SK-N-SH (cell line): ENCODE measurements at regions of chr6 and their contacts with region 1.

Region 1: GRCh38 chr6:11496152-11497060 is 41.1 kb upstream of the TMEM170B start:
- DNase-seq: peak; percentile 70
- H3K4me3 ChIP-seq: no peak overlapping the region; a peak in 1 of 4 replicates
- H3K27ac ChIP-seq: peak overlapping the region; percentile 45 to 91
- H3K4me1 ChIP-seq: peaks cover 4 to 24% of the 10 kb centered on the region in 2 experiments; a peak in 3 of 4 replicates
- H3K27me3 ChIP-seq: no peaks in the 10 kb centered on the region
- CTCF ChIP-seq: peak; percentile 96
- EP300 ChIP-seq: peak in 1 of 2 experiments; percentile 61; a peak in 1 of 4 replicates
- RAD21 ChIP-seq: peak; percentile 98

Region 2: DNA sequence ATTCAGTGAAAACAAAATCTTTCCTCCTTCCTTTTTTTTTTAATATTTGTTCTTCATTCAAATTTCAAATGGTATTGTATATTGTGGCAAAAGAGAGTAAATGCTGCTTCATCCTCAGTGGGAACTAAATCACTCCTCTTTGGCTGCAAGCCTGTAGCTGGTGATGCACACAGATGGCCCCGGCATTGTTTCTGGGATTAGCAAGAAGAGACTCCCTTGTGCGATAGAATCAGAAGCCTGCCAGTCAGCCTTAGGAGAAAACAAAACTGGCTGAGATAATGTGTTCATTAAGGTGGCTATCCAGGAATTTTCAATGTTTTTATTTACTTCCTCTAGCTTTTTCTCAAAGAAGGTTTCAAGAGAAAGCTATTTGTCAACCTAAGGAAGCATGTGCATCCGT is 431.6 kb before region 1 on chr6:
- CTCF ChIA-PET with region 1: interaction called, 19 read pairs
- POLR2A ChIA-PET with region 1: no interaction called
- DNase-seq: peak; percentile 39
- H3K4me3 ChIP-seq: no peak overlapping the region
- H3K27ac ChIP-seq: no peak overlapping the region
- H3K4me1 ChIP-seq: peaks cover 0 to 3% of the 10 kb centered on the region in 2 experiments; a peak in 1 of 4 replicates
- H3K27me3 ChIP-seq: no peaks in the 10 kb centered on the region
- CTCF ChIP-seq: no peak
- EP300 ChIP-seq: no peak
- RAD21 ChIP-seq: no peak

Region 3: GRCh38 chr6:11144393-11144851 is 352.0 kb before region 1 on chr6:
- CTCF ChIA-PET with region 1: interaction called, 181 read pairs
- POLR2A ChIA-PET with region 1: no interaction called
- DNase-seq: peak; percentile 76
- H3K4me3 ChIP-seq: peak overlapping the region in 1 of 2 experiments; percentile 32; a peak in 1 of 4 replicates
- H3K27ac ChIP-seq: peak overlapping the region in 1 of 2 experiments; percentile 36; a peak in 1 of 4 replicates
- H3K4me1 ChIP-seq: peaks cover 5 to 7% of the 10 kb centered on the region in 2 experiments; a peak in 3 of 4 replicates
- H3K27me3 ChIP-seq: no peaks in the 10 kb centered on the region
- CTCF ChIP-seq: peak; percentile 98
- EP300 ChIP-seq: no peak
- RAD21 ChIP-seq: peak; percentile 96

Region 4: DNA sequence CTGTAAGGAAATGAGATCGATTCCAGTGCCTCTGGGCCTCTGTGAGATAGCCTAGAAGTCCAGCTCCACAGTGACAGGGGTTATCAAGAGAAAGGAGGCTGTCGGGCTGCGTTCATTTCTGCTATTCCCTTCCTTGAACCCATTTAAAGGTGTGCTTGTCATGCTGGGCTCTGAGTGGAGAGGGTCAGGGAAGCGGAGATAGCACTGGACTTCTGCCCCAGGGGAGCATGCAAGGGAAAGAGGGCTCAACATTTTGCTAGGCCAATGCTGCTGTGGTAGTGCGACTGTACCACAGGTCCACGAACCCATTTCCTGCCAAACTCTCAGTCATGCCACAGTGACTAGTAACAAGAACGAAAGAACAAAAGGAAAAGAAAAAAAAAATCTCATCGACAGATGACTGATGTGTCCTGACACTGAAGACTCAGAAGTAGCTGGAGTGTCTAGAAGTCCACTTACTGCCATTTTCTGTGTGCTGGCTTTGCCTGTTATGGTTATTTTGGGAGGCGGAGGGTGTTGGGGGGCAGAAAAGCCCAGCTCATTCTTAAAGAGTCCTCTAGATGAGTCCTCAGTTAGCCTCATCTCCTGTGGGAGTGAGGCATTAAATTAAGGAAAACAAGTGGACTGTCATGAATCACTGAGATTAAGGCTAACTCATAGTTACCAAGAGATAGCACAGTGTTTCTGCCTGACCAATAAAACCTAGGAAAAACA is 272.0 kb before region 1 on chr6:
- CTCF ChIA-PET with region 1: interaction called, 27 read pairs
- POLR2A ChIA-PET with region 1: no interaction called
- DNase-seq: no peak
- H3K4me3 ChIP-seq: no peak overlapping the region
- H3K27ac ChIP-seq: peak overlapping the region; percentile 44 to 78
- H3K4me1 ChIP-seq: peaks cover 25 to 56% of the 10 kb centered on the region in 2 experiments; a peak in 3 of 4 replicates
- H3K27me3 ChIP-seq: no peaks in the 10 kb centered on the region
- CTCF ChIP-seq: no peak
- EP300 ChIP-seq: no peak
- RAD21 ChIP-seq: no peak

Region 5: DNA sequence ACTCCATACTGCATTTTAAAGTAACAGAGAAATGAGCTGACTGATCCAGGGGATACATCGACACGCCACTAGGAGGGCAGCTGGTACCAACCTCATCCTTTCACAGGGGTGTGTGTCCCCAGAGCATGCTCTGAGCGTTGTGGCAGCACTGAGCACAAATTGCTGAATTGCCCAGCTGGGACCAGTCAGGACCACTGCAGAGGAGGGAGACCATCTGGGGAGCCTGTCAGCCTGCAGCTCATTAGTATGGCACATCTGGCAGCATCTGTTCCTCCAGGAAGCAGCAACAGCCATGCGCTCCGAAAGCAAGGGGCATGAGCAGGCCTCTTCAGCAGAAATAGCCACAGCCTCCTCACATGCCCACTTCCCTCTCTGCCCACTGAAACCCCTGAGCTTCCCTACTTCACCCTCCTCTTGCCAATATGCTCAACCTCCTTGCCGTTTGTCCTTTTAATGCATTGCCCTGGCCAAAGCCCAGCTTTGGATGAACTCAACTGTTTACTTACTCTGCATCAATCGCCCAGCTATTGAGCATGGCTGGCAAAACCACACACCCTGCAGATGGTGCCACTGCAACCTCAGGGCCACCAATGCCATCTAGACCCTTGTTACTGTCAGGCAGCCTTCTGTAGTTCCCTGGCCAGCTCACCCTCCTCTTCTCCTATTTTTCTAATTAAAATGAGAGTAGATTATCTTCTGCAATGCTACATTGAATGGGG is 186.3 kb before region 1 on chr6:
- CTCF ChIA-PET with region 1: interaction called, 23 read pairs
- POLR2A ChIA-PET with region 1: interaction called, 3 read pairs
- DNase-seq: peak; percentile 67
- H3K4me3 ChIP-seq: no peak overlapping the region
- H3K27ac ChIP-seq: peak overlapping the region in 1 of 2 experiments; percentile 64; a peak in 2 of 4 replicates
- H3K4me1 ChIP-seq: peaks cover 0 to 7% of the 10 kb centered on the region in 2 experiments; a peak in 1 of 4 replicates
- H3K27me3 ChIP-seq: no peaks in the 10 kb centered on the region
- CTCF ChIP-seq: no peak
- EP300 ChIP-seq: no peak
- RAD21 ChIP-seq: peak; percentile 23; the same call in 1 of the 2 replicates

Region 6: DNA sequence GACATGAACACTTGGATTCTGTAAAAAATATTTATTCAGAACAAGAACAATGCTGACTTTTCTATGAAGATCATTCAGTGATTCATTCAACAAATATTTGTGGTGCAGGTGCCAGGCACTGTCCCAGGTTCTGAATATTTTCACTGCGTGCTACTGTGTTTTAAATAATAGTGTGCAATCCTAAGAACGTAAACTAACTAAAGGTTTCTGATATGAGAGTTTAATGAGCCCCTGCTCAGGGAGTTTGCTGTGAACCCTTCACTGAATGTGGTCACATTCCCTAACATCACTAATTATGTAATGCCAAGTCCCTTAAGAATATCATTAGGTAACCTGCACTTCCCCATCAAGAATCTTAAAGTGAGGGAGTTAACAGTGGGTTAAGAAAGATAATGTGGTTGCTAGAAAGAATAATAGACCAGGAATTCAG is 39.4 kb after region 1 on chr6:
- CTCF ChIA-PET with region 1: interaction called, 10 read pairs
- POLR2A ChIA-PET with region 1: interaction called, 3 read pairs
- DNase-seq: no peak
- H3K4me3 ChIP-seq: no peak overlapping the region
- H3K27ac ChIP-seq: no peak overlapping the region
- H3K4me1 ChIP-seq: peaks cover 0 to 5% of the 10 kb centered on the region in 2 experiments; a peak in 2 of 4 replicates
- H3K27me3 ChIP-seq: no peaks in the 10 kb centered on the region
- CTCF ChIP-seq: no peak
- EP300 ChIP-seq: no peak
- RAD21 ChIP-seq: no peak

Region 7: GRCh38 chr6:11722805-11723631 is 226.6 kb after region 1 on chr6:
- CTCF ChIA-PET with region 1: no interaction called
- POLR2A ChIA-PET with region 1: no interaction called
- DNase-seq: no peak
- H3K4me3 ChIP-seq: no peak overlapping the region
- H3K27ac ChIP-seq: no peak overlapping the region
- H3K4me1 ChIP-seq: no peaks in the 10 kb centered on the region
- H3K27me3 ChIP-seq: no peaks in the 10 kb centered on the region
- CTCF ChIP-seq: no peak
- EP300 ChIP-seq: no peak
- RAD21 ChIP-seq: no peak

Region 8: DNA sequence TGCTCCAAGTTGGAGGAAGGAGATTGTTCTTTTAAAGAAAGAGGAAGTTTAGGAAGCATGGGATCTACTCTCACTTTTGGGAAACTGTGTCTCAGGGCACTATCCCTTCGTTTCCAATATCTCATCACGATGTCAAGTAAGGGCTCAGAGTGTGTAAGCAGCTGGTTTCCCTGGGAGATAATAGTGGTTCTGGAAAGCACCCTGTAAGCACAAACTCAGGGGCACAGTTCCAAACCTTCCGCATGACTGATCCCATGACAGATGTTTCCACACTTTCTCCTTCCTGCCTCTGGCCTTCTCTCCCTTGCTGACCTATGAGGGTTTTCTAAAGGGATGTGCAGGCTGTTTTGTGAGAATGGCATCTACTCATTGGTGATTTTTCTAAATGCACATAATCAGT is 248.3 kb after region 1 on chr6:
- CTCF ChIA-PET with region 1: no interaction called
- POLR2A ChIA-PET with region 1: no interaction called
- DNase-seq: no peak
- H3K4me3 ChIP-seq: no peak overlapping the region
- H3K27ac ChIP-seq: no peak overlapping the region
- H3K4me1 ChIP-seq: no peaks in the 10 kb centered on the region
- H3K27me3 ChIP-seq: no peaks in the 10 kb centered on the region
- CTCF ChIP-seq: no peak
- EP300 ChIP-seq: no peak
- RAD21 ChIP-seq: no peak